ENCODE measurements at regions of chr11 and their contacts with region 1.

Region 1: GRCh38 chr11:78188286-78189173 is at the starts of genes KCTD21 and USP35:
- DNase-seq: peak; percentile 80 to 96 (median 88)
- ATAC-seq: peak; percentile 82
- H3K4me3 ChIP-seq: peak within 1 kb of the TSS; percentile 97
- H3K4me3 Mint-ChIP-seq: peak within 1 kb of the TSS; percentile 99
- H3K27ac ChIP-seq: peak within 1 kb of the TSS; percentile 56 to 86
- H3K27ac Mint-ChIP-seq: peak within 1 kb of the TSS; percentile 99
- H3K4me1 ChIP-seq: peaks cover 53% of the 10 kb centered on the region
- H3K4me1 Mint-ChIP-seq: peaks cover 55% of the 10 kb centered on the region
- H3K27me3 ChIP-seq: no peaks in the 10 kb centered on the region
- H3K27me3 Mint-ChIP-seq: no peaks in the 10 kb centered on the region
- CTCF ChIP-seq: no peak
- total RNA-seq, gene KCTD21: 3.5 to 6.5 TPM
- total RNA-seq, gene USP35: 29.2 to 33.1 TPM

Region 2: DNA sequence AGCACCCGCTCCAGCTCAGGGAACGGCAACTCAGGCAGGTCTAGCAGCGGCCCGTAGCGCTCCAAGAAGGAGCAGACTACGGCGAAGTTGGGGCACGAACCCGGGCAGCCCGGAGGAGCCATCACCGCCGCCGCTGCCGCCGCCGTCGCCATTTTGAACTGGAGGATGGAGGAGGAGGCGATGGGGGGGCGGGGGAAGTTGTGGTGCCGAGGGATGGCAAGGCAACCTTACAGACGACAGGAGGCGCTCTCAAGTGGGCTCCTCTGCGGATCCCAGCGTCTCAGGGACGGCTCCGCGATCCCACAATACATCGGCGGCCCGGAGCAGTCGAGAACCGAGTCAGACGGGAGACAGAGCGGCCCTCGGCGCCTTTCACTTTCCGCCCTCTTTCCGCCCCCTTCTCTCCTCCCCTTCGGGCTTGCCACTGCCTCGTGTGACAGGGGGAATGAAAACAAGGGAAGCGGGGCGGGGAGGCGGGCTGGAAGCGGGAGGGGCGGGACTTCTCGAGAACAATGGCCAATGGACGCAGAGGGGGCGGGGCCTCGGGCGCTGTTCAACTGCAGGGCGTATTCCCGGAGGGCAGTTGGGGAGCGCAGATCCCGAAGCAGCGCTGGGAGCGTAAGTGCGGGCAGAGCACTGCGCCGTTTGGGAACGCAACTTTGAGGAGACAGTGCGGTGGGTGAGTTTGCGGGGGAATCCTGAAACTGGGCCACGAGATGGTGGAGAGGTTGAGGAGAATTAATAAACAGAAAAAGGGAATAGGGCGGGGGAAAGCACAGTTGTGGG is 367.8 kb before region 1 on chr11 and contains the starts of genes AAMDC and RSF1:
- CTCF ChIA-PET with region 1: no interaction called
- POLR2A ChIA-PET with region 1: no interaction called
- intact Hi-C with region 1: loop called in 1 of 2 experiments (anchors 5 kb)
- DNase-seq: peak; percentile 92 to 99 (median 96)
- ATAC-seq: peak; percentile 80
- H3K4me3 ChIP-seq: peak within 1 kb of the TSS; percentile 84
- H3K4me3 Mint-ChIP-seq: peak within 1 kb of the TSS; percentile 98
- H3K27ac ChIP-seq: peak within 1 kb of the TSS; percentile 74 to 95
- H3K27ac Mint-ChIP-seq: peak within 1 kb of the TSS; percentile 92
- H3K4me1 ChIP-seq: peaks cover 29% of the 10 kb centered on the region
- H3K4me1 Mint-ChIP-seq: peaks cover 46% of the 10 kb centered on the region
- H3K27me3 ChIP-seq: no peaks in the 10 kb centered on the region
- H3K27me3 Mint-ChIP-seq: no peaks in the 10 kb centered on the region
- CTCF ChIP-seq: peak; percentile 69
- total RNA-seq, gene AAMDC: 1.5 to 2.1 TPM
- total RNA-seq, gene RSF1: 87.7 to 91.9 TPM

Region 3: DNA sequence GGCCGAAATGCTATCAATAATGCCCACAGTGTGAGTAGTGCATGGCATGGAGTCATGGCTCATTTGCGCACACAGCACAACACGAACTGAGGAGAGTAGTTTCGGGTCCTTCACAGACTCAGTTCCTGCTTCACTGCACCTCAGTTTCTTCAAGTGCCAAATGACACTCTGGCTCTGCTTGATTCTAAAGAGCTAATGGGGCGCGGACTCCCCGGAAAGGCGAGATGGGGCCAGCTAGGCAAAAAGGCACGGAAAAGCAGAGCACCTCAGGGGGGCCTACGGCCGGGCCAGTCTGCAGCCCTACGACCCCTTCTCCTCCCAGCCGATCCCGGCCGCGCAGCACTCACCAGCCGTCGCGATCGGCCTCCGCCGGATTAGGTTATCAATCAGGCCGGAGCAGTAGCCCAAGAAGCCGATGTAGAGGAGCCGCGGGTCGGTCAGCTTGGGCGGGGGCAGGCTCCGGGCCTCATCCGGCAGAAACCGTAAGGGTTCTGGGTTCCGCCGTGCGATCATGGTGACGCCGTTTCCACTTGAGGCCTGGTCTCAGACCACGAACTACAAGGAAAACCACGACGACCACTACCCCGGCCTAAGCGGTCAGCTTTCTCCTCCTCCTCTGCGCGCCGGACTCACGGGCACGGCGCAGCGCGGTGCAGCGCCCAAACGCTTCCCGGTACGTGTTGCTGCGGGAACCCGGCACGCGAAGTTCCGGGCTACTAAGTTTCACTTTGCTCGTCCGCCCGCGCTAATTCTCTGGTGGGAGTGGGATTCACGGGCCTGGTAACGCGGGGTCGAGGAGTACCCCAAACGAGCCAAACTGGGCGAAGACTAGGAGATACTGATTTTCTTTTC is 109.1 kb before region 1 on chr11 and contains the start of gene NDUFC2:
- CTCF ChIA-PET with region 1: no interaction called
- POLR2A ChIA-PET with region 1: interaction called, 7 read pairs
- intact Hi-C with region 1: loop called in 1 of 2 experiments (anchors 5 kb)
- DNase-seq: peak; percentile 45 to 82 (median 58)
- ATAC-seq: peak; percentile 79
- H3K4me3 ChIP-seq: peak within 1 kb of the TSS; percentile 88
- H3K4me3 Mint-ChIP-seq: peak within 1 kb of the TSS; percentile 96
- H3K27ac ChIP-seq: peak within 1 kb of the TSS; percentile 57 to 65
- H3K27ac Mint-ChIP-seq: peak within 1 kb of the TSS; percentile 93
- H3K4me1 ChIP-seq: peaks cover 41% of the 10 kb centered on the region
- H3K4me1 Mint-ChIP-seq: peaks cover 60% of the 10 kb centered on the region
- H3K27me3 ChIP-seq: no peaks in the 10 kb centered on the region
- H3K27me3 Mint-ChIP-seq: no peaks in the 10 kb centered on the region
- CTCF ChIP-seq: no peak
- total RNA-seq, gene NDUFC2: 62.6 to 68.5 TPM

Region 4: DNA sequence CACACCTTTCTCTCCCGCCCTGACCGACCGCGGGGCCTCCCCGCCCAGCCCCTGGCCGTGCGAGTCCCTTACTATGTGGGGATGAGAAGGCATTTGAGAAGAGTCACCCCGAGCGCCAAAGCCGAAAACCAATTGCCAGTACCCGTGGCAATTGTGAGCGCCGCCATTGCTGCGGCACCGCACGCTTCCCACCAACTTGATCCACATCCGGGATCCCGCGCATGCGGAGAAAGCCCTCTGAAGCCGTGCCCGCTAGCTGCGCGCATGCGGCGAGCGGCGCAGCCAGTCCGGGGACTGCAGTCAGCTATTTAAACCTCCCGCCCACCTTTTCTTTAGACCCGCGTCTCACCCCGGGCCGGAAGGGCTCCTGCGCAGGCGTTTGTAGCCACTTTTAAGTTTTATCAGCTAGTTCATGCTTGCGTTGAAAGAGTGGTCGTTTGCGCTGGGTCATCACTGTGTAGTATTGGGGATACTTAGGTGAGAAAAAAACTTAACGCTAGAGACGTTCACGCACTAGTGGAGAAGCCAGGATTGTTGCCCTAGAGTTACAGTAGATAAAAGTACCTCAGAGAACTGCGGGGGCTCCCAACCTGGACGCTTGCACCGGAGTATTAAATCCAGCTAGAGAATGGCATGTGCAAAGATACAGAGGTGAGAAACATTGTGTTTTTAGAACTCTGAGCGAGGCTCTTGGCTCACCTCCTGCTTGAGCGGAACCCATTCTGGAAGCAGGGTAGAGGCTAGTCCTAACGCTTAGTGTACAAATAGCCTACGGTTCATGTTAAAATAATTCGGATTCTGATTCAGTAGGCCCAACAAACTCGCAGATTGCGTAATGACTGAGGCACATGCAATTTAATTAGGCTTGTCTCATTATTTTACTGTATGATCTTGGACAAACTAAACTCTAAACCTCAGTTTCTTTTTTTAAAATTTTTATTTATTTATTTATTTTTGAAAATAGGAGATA is 48.8 kb before region 1 on chr11 and contains the start of gene ALG8:
- CTCF ChIA-PET with region 1: interaction called, 5 read pairs
- POLR2A ChIA-PET with region 1: interaction called, 32 read pairs
- intact Hi-C with region 1: loop called (anchors 1 to 2 kb)
- DNase-seq: peak; percentile 96 to 98 (median 97)
- ATAC-seq: peak; percentile 94
- H3K4me3 ChIP-seq: peak within 1 kb of the TSS; percentile 82
- H3K4me3 Mint-ChIP-seq: peak within 1 kb of the TSS; percentile 96
- H3K27ac ChIP-seq: peak within 1 kb of the TSS; percentile 72 to 84
- H3K27ac Mint-ChIP-seq: peak within 1 kb of the TSS; percentile 91
- H3K4me1 ChIP-seq: peaks cover 20% of the 10 kb centered on the region
- H3K4me1 Mint-ChIP-seq: peaks cover 49% of the 10 kb centered on the region
- H3K27me3 ChIP-seq: no peaks in the 10 kb centered on the region
- H3K27me3 Mint-ChIP-seq: no peaks in the 10 kb centered on the region
- CTCF ChIP-seq: no peak
- total RNA-seq, gene ALG8: 14.4 to 14.9 TPM

Region 5: DNA sequence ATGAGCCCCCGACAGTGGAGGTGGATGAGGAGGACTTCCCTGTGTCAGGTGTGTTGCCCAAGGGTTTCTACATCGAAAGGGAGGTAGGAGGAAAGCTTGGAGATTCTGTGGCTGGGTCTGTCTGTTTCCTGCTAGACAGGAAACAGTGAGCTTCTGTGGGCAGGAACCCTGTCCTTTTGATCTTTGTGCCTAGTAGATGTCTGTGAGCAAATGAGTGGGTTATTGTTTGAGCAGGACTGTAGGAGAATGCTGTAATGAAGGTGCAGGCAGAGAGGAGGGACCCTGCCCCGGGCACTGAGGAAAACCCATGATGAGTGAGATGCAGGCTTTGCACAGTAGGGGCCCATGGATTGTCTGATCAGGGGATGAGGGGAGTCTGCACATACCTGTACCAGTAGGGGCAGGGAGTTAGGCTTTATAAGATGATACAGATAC is 14.2 kb after region 1 on chr11:
- CTCF ChIA-PET with region 1: interaction called, 15 read pairs
- POLR2A ChIA-PET with region 1: interaction called, 51 read pairs
- intact Hi-C with region 1: loop called (anchors 1 to 2 kb)
- DNase-seq: peak; percentile 43 to 93 (median 60)
- ATAC-seq: peak; percentile 76
- H3K4me3 ChIP-seq: peak overlapping the region; percentile 30
- H3K4me3 Mint-ChIP-seq: peak overlapping the region; percentile 86
- H3K27ac ChIP-seq: peak overlapping the region; percentile 53 to 98
- H3K27ac Mint-ChIP-seq: peak overlapping the region; percentile 98
- H3K4me1 ChIP-seq: peaks cover 64% of the 10 kb centered on the region
- H3K4me1 Mint-ChIP-seq: peaks cover 51% of the 10 kb centered on the region
- H3K27me3 ChIP-seq: no peaks in the 10 kb centered on the region
- H3K27me3 Mint-ChIP-seq: no peaks in the 10 kb centered on the region
- CTCF ChIP-seq: no peak

Region 6: GRCh38 chr11:78416305-78417178 is 228.0 kb after region 1 on chr11:
- CTCF ChIA-PET with region 1: interaction called, 3 read pairs
- POLR2A ChIA-PET with region 1: interaction called, 3 read pairs
- intact Hi-C with region 1: loop called (anchors 5 kb)
- DNase-seq: peak; percentile 57 to 86 (median 74)
- ATAC-seq: peak; percentile 70
- H3K4me3 ChIP-seq: peak overlapping the region; percentile 59
- H3K4me3 Mint-ChIP-seq: peak overlapping the region; percentile 88
- H3K27ac ChIP-seq: peak overlapping the region in 1 of 2 donors; percentile 4
- H3K27ac Mint-ChIP-seq: peak overlapping the region; percentile 84
- H3K4me1 ChIP-seq: peaks cover 33% of the 10 kb centered on the region
- H3K4me1 Mint-ChIP-seq: peaks cover 22% of the 10 kb centered on the region
- H3K27me3 ChIP-seq: peaks cover 0 to 5% of the 10 kb centered on the region in 2 experiments
- H3K27me3 Mint-ChIP-seq: peaks cover 28% of the 10 kb centered on the region
- CTCF ChIP-seq: peak; percentile 73

Measured in CD4-positive, alpha-beta T cell (primary cell).